Calu3 (cell line): ENCODE measurements at regions of chr3 and their contacts with region 1.

Region 1: DNA sequence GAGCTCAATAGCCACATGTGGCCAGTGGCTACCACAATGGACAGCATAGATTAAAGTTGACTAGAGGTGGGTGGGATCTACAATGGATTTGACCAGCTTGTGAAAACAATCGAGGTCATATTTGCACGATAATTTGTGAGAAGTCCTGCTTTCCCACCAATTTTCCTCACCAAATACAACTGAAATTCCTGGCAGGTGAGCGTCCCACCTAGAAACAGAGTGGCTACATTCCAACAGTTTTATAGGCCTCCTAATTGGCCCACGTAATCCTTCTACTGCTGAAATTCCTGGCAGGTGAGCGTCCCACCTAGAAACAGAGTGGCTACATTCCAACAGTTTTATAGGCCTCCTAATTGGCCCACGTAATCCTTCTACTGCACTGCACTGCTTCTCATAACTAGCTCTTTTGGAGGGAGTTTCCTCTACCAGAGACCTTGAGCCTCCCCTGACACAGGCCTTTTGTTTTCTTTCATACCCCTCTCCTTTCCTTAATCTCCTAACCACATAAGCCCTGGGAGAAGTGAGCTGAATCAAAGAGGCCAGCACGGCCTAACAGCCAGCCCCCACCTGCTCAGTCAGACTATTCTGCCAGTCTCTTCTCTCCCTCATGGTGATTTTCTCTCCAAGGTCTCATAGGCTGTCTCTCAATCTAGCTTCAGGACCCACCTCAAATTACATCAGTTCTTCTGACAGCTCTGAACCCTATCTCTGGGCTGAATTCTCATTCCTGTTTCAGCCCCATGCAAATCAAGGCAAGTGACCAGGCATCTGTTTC is 80.2 kb downstream of the BFSP2 start:
- DNase-seq: peak; percentile 79
- H3K4me3 Mint-ChIP-seq: peak overlapping the region; percentile 3
- H3K27ac Mint-ChIP-seq: peak overlapping the region; percentile 94
- H3K4me1 Mint-ChIP-seq: peaks cover 16% of the 10 kb centered on the region
- H3K27me3 Mint-ChIP-seq: no peaks in the 10 kb centered on the region
- CTCF ChIP-seq: no peak

Region 2: DNA sequence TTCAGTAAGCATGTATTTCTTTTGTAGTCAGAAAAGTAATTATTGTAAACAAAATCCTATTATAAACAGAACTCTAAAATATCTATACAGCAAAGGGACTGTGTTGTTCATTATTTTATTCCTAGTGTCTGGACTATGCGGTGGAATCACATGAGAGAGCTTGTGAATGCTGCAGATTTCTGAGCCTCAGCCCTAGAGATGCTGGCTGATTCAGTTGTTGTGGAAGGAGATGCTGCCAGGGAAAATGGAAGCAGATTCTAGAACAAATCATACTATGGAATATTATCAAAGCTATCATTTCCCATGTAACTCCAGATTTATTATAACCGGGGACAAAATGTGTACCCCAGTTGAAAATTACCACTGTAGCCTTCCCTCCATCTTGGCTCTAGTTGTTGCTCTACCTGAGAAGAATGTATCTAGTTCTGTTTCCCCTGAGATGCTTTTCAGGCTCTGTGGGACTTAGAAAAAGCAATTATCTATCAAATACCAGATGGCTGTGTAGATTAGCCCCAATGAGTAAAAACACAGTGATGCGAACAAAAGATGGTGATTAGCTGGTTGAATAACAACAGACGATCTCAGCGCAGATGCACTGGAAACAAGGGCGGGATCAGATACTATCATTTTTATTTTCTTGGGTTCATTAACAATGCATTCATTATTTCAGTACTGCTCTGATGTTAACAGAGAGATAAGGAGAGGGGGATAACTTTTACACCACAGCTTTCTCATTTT is 310.6 kb before region 1 on chr3:
- CTCF ChIA-PET with region 1: no interaction called
- intact Hi-C with region 1: no loop called
- DNase-seq: no peak
- H3K4me3 Mint-ChIP-seq: no peak overlapping the region
- H3K27ac Mint-ChIP-seq: no peak overlapping the region
- H3K4me1 Mint-ChIP-seq: no peaks in the 10 kb centered on the region
- H3K27me3 Mint-ChIP-seq: peaks cover 10% of the 10 kb centered on the region
- CTCF ChIP-seq: no peak

Region 3: GRCh38 chr3:133192363-133192945 is 287.6 kb before region 1 on chr3:
- CTCF ChIA-PET with region 1: no interaction called
- intact Hi-C with region 1: no loop called
- DNase-seq: no peak
- H3K4me3 Mint-ChIP-seq: no peak overlapping the region
- H3K27ac Mint-ChIP-seq: no peak overlapping the region
- H3K4me1 Mint-ChIP-seq: no peaks in the 10 kb centered on the region
- H3K27me3 Mint-ChIP-seq: peaks cover 44% of the 10 kb centered on the region
- CTCF ChIP-seq: no peak

Region 4: DNA sequence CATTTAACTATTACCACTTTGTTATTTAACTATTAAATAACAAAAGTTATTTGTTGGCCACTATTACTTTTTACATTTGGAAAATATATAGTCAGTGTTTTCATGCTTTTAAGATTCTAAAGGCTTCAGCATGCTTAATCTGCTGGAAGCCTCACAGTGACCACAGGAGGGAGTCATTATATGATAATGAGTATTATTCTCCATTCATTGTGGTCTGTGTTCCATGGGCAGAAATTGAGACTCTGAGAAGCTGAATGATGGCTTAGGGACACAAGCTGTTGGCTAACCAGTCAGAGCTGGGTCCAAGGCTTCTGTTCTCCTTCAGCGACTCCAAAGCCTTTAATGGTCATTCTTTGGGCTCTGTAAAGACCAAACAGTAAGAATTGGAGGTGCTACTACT is 15.5 kb before region 1 on chr3:
- CTCF ChIA-PET with region 1: interaction called, 14 read pairs
- intact Hi-C with region 1: no loop called
- DNase-seq: peak; percentile 21
- H3K4me3 Mint-ChIP-seq: no peak overlapping the region
- H3K27ac Mint-ChIP-seq: no peak overlapping the region
- H3K4me1 Mint-ChIP-seq: peaks cover 23% of the 10 kb centered on the region
- H3K27me3 Mint-ChIP-seq: no peaks in the 10 kb centered on the region
- CTCF ChIP-seq: peak; percentile 22

Region 5: GRCh38 chr3:134239538-134239937 is 759.5 kb after region 1 on chr3:
- CTCF ChIA-PET with region 1: no interaction called
- intact Hi-C with region 1: no loop called
- DNase-seq: no peak
- H3K4me3 Mint-ChIP-seq: no peak overlapping the region
- H3K27ac Mint-ChIP-seq: no peak overlapping the region
- H3K4me1 Mint-ChIP-seq: peaks cover 80% of the 10 kb centered on the region
- H3K27me3 Mint-ChIP-seq: no peaks in the 10 kb centered on the region
- CTCF ChIP-seq: no peak